ENCODE measurements at regions of chr10 and their contacts with region 1.

Region 1: DNA sequence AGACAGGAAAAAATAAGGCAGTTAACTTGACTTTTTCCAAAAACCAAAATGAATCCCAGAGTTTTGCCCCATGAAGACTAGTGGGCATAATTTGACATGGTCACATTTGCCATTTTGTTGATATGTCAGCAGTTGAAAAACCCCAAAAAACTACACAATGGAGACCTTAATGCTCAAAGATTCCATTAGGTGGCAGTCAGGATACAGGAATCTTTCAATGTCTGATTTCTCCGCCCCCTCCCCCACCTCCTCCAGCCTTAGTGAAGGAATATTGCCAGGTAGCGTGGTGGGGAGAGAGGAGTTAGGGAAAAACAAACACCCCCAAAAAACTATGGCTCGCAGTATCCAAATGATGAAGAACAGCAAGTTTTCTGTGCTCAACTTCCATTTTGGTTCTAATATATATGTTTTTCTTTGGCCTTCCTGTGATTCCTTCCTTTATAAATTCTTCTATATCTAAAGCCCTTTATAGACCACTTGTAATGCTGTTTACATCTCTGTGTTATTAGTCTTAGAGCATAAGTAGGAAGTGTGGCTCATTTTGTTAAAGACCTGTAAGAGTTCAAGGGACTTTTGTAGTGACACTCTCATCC is 6.7 kb upstream of the SMNDC1 start:
- DNase-seq: peak; percentile 74
- H3K4me3 Mint-ChIP-seq: no peak overlapping the region
- H3K27ac Mint-ChIP-seq: no peak overlapping the region
- H3K4me1 Mint-ChIP-seq: peaks cover 34% of the 10 kb centered on the region
- H3K27me3 Mint-ChIP-seq: no peaks in the 10 kb centered on the region

Region 2: DNA sequence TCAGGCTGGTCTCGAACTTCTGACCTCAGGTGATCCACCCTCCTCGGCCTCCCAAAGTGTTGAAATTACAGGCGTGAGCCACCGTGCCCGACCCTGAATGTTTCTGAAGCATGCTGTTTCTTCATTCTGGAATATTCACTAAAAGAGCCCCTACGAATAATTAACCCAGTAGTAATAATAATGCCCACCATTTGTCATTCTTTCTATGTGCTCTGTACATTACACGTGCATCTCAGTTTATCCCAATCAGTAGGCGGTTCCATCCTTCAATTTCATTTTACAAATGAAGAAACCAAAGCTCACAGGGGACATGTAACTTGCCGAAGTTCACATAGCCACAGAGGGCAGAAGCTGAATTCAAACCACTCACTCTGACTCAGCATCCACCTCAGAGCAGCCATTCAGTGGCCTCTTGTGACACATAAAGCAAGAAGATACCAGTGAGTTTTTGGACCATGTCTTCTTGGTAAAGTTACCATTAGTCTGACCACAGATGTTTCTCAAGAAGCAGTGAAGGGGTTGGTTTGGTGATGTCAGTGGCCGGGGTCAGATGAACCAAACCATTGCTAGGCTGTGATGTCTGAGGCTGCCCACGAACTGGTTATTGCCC is 114.3 kb after region 1 on chr10:
- intact Hi-C with region 1: loop called (anchors 2 kb)
- DNase-seq: peak; percentile 82
- H3K4me3 Mint-ChIP-seq: peak overlapping the region; percentile 51
- H3K27ac Mint-ChIP-seq: peak overlapping the region; percentile 92
- H3K4me1 Mint-ChIP-seq: peaks cover 55% of the 10 kb centered on the region
- H3K27me3 Mint-ChIP-seq: no peaks in the 10 kb centered on the region

Region 3: GRCh38 chr10:110502851-110503301 is 191.4 kb after region 1 on chr10:
- intact Hi-C with region 1: loop called (anchors 1 kb)
- DNase-seq: peak; percentile 84
- H3K4me3 Mint-ChIP-seq: peak overlapping the region; percentile 99
- H3K27ac Mint-ChIP-seq: peak overlapping the region; percentile 92
- H3K4me1 Mint-ChIP-seq: peaks cover 78% of the 10 kb centered on the region
- H3K27me3 Mint-ChIP-seq: no peaks in the 10 kb centered on the region

Region 4: GRCh38 chr10:110547139-110547761 is 235.8 kb after region 1 on chr10:
- intact Hi-C with region 1: loop called (anchors 1 kb)
- DNase-seq: peak; percentile 77
- H3K4me3 Mint-ChIP-seq: peak overlapping the region; percentile 47
- H3K27ac Mint-ChIP-seq: peak overlapping the region; percentile 10
- H3K4me1 Mint-ChIP-seq: peaks cover 19% of the 10 kb centered on the region
- H3K27me3 Mint-ChIP-seq: peaks cover 28% of the 10 kb centered on the region

Region 5: DNA sequence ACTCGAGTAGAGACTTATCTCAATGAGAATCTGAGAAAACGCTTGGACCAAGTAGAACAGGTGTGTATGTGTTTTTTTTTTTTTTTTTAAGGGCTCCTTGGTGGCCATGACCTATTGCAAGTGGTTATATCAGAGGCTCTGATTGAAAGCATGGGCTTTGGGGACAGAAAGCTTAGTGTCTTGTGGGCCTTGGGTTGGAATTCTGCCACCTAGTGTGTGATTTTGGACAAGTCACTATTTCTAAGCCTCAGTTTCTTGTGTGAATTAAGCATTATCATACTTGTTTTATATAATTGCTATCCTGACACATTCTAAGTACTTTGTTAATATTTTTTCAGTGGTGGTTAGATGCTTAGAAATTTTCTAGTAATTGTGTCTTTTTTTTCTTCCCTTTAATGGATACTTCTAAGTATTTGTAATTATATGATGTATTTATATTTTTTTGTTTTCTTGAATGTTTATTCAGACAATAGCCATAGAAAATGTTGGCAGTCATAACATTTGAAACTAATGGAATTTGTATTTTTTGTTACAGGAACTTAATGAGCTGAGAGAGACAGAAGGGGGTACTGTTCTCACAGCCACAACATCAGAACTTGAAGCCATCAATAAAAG is 289.1 kb after region 1 on chr10:
- intact Hi-C with region 1: loop called (anchors 1 kb)
- DNase-seq: peak; percentile 84
- H3K4me3 Mint-ChIP-seq: no peak overlapping the region
- H3K27ac Mint-ChIP-seq: no peak overlapping the region
- H3K4me1 Mint-ChIP-seq: peaks cover 2% of the 10 kb centered on the region
- H3K27me3 Mint-ChIP-seq: no peaks in the 10 kb centered on the region

Measured in activated CD4-positive, alpha-beta T cell treated with anti-CD3 and anti-CD28 coated beads, Interleukin-2, amount 10 ng/mL, durations not matched to agents 24 days and 14 days (primary cell).